ENCODE measurements at regions of chr1 and their contacts with region 1.

Region 1: DNA sequence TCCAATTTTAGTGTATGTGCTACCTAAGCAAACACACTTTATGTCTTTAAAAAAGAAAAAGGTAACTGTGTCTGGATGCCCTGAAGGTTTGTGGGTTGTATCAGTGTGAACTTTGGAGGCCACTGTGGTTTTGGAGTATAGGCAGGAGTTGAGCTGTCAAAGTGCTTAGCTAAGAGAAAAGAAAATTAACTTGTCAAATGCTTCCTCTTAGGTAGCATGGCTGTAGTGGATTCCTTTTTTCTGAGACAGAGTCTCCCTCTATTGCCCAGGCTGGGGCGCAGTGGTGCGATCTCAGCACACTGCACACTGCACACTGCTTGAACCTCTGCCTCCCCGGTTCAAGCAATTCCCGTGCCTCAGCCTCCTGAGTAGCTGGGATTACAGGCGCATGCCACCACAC is 11.2 kb upstream of the SLC41A1 start:
- DNase-seq: no peak
- ATAC-seq: no peak

Region 2: GRCh38 chr1:205807100-205807499 is 17.1 kb before region 1 on chr1:
- intact Hi-C with region 1: loop called (anchors 1 kb)
- DNase-seq: no peak
- ATAC-seq: no peak

Region 3: DNA sequence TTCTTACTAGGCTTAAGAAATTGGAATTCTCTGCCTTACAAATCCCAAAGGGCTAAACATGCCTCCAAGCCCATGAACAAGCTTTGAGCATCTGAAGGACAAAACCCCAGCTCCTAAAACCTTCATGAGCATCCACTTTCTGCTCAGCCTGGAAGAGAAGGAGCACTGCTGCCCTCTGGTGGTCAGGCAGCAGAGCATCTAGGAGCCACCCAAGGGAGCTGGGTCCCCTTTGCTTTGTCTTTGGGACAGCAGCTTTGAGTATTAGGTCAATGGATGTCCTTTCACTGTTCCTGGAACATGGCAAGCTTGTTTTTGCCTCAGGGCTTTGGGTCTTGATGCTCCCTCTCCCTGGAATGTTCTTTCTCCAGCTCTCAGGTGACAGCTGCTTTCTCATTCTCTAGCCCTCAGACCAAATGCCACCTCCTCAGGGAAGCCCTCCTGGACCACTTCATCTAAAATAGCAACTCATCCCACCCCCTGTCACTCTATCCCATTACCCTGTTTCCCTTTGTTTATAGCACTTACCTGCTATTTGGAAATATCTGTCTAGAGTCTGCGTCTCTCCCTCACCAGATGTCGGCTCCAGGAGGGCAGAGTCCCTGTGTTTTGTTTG is 153.3 kb after region 1 on chr1:
- intact Hi-C with region 1: no loop called
- DNase-seq: peak; percentile 88
- ATAC-seq: peak; percentile 79

Measured in sciatic nerve (tissue), 2 donors.